ENCODE measurements at regions of chr17 and their contacts with region 1.

Region 1: DNA sequence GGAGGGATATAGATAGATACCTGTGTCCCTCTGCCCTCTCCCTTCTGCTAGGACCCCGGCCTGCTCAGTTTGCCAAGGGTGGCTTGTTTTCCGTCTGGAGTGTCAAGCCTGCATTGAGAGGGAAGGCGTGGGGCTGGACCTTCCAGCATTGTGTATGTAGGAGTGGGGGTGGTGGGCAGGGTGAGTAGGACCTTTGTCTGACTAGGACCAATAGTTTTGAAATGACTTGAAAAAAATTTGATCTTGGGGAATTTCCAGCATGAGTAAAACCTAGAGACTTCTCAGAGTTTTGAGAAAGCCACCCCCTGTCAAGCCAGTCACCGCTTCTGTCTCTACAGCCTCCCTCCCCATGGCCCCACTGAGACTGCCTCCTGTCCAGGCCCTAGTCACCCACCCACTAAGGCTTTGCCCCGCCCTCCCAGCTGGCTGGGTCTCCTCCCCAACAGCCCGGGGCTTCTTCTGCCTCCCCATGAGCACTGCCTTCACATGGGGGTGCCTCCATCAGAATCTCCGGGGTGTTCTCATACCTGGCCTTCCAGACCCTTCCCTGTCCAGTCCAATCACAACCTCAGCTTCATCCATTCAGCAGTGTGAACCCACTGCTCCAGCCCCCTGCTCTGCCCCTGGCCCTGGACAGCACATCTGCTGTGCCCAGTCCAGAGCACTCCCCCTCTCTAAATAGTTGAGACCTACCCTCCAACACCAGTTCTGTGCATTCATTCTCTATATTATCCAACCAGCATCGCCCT is 207.0 kb downstream of the MSI2 start:
- DNase-seq: peak; percentile 82
- H3K4me3 Mint-ChIP-seq: peak overlapping the region; percentile 70
- H3K27ac Mint-ChIP-seq: peak overlapping the region; percentile 90
- H3K4me1 Mint-ChIP-seq: peaks cover 72% of the 10 kb centered on the region
- H3K27me3 Mint-ChIP-seq: no peaks in the 10 kb centered on the region

Region 2: DNA sequence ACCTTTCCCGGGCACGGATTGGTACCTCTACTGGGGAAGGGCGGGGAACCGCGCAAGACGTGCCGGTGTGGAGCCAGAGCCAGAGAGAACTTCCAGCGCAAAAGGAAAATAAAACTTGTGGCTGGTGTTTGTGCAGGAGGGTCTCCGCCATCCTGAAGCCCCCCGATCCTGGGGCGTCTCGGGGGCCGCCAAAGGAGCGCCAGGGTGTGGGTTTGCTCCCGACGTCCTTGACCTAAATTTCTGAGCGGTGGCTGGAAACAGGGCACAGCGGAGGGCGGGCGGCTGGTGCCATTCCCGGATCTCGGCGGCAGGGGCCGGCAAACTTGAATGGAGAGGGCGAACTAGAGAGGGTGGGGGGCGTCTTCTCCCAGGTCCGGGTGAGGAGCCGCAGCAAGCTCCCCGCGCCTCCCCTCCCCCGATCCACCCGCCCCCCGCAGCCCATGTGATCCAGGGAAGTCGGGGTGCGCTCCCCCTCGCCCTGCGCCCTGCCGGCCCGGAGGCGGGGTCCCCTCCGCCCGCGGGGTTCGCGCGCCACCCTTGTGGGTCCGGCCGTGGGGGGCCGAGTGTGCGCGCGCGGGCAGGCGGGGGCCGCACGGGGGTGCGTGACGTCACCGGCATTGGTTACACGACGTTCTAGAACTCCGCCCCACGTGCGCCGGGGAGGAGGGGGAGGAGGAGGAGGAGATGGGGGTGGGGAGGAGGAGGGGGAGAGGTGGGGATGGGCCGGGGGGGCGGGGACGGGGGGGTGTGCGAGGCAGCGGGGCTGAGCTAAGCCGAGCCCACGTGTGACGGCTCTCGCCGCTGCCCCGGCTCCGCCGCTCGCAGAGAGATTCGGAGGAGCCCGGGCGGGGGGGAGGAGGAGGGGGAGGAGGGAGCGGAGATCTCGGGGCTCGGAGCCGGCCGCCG is 207.2 kb before region 1 on chr17 and contains the start of gene MSI2:
- intact Hi-C with region 1: loop called (anchors 1 kb)
- DNase-seq: peak; percentile 84
- H3K4me3 Mint-ChIP-seq: peak within 1 kb of the TSS; percentile 89
- H3K27ac Mint-ChIP-seq: peak within 1 kb of the TSS; percentile 93
- H3K4me1 Mint-ChIP-seq: peaks cover 47% of the 10 kb centered on the region
- H3K27me3 Mint-ChIP-seq: no peaks in the 10 kb centered on the region
- total RNA-seq, gene MSI2: 272 and 278 TPM in 2 replicates

Region 3: DNA sequence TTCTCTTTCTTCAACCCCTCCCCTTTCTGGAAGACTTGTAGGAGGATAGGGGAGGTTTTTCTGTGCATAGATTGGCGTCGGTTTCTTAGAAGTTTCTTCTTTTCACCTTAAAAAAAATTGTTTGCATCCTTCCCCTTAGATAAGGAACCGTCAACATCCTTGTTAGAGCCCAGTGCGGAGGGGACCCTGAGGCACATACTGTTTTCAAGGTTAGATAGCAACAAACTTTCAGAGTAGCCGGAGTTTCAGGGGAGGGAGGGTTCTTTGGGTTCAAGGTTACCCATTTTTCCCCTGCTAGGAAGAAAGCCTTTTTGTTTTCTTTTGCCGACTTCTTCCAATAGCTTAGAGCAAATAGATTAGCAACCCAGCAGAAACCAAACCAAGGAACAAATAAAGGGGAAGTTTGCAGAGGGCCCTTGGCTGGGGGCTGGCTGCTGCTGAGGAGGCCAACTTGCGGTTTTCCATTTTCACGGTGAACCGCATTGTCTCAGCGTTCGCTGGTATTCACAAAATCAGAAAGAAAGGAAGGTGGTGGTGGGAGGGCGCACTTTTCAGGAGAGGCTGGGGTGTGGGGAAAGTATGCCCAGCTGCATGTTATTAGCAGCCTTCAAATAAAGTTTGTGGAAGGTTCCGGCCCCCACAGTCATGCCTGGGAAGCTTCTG is 178.2 kb before region 1 on chr17:
- intact Hi-C with region 1: loop called (anchors 1 kb)
- DNase-seq: peak; percentile 64
- H3K4me3 Mint-ChIP-seq: peak overlapping the region; percentile 59
- H3K27ac Mint-ChIP-seq: peak overlapping the region; percentile 94
- H3K4me1 Mint-ChIP-seq: peaks cover 94% of the 10 kb centered on the region
- H3K27me3 Mint-ChIP-seq: no peaks in the 10 kb centered on the region

Region 4: GRCh38 chr17:57486873-57487301 is 23.6 kb after region 1 on chr17:
- intact Hi-C with region 1: loop called (anchors 1 kb)
- DNase-seq: no peak
- H3K4me3 Mint-ChIP-seq: peak overlapping the region; percentile 27
- H3K27ac Mint-ChIP-seq: peak overlapping the region; percentile 33
- H3K4me1 Mint-ChIP-seq: peaks cover 64% of the 10 kb centered on the region
- H3K27me3 Mint-ChIP-seq: no peaks in the 10 kb centered on the region

Region 5: GRCh38 chr17:57505841-57506773 is 42.8 kb after region 1 on chr17:
- intact Hi-C with region 1: loop called (anchors 2 kb)
- DNase-seq: no peak
- H3K4me3 Mint-ChIP-seq: no peak overlapping the region
- H3K27ac Mint-ChIP-seq: no peak overlapping the region
- H3K4me1 Mint-ChIP-seq: peaks cover 12% of the 10 kb centered on the region
- H3K27me3 Mint-ChIP-seq: no peaks in the 10 kb centered on the region

Region 6: DNA sequence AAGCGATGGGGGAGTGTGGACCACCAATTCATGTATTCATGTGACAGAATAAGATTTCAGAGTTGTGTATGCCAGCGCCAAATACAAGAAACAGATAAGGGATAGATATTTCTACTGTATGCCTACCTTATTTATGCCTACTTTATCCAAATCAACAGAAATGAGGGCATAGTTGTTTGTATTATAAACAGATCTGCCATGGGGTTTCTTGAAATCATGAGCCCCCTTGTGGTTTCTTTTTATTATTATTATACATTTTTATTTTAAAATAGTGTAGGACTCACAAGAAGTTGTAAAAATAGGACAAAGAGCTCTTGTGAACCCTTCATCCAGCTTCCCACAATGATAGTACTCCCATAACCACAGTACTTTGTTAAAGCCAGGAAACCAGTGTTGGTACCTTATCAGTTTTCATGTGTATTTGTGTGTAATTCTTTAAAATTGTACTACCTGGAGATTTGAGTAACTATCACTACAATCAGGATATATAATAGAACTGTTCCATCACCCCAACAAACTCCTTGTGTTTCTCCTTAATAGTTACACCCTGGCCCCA is 52.5 kb after region 1 on chr17:
- intact Hi-C with region 1: loop called (anchors 2 kb)
- DNase-seq: no peak
- H3K4me3 Mint-ChIP-seq: no peak overlapping the region
- H3K27ac Mint-ChIP-seq: peak overlapping the region; percentile 5
- H3K4me1 Mint-ChIP-seq: peaks cover 20% of the 10 kb centered on the region
- H3K27me3 Mint-ChIP-seq: peaks cover 2% of the 10 kb centered on the region

Region 7: DNA sequence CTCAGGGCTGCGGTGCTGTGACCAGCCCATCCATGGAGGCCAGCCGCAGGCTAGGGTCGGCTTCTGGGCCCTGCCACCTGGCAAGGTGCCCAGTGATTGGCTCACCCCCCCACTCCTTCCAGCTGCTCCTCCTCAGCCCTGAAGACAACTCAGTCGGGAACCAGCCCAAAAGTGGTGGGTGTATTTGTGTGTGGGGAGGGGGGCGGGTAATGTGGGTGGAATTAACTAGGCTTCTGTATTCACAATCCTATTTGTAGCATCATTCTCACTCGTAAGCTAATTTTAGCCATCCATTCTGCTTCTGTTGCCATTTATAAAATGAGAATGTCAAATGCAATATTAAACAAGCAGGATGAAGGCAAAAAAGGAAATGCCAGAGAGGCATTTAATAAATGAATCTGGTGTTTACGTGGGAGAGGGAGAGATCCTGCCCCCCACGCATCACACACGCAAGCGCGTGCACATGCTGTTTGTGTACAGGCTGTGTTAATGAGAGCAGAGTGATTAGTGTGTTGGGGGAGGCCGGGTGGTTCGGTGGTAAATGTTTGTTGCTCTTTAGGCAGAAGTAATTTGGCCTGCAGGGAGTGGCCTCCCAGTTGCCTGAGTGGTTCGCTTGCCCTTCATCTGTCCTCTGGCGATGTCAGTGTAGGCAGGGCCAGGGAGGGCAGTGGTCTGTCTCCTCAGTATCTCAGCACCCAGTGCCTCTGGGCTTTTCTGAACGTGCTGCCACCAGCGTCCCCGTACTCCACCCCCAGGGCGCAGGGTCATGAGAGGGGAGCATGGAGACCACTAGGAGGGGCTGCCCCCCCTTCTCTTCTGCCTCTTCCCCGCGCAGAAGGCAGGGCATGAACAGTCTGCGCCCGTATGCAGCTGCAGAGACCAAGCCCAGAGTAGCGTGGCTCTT is 141.7 kb after region 1 on chr17:
- intact Hi-C with region 1: loop called (anchors 2 kb)
- DNase-seq: no peak
- H3K4me3 Mint-ChIP-seq: peak overlapping the region; percentile 54
- H3K27ac Mint-ChIP-seq: peak overlapping the region; percentile 94
- H3K4me1 Mint-ChIP-seq: peaks cover 70% of the 10 kb centered on the region
- H3K27me3 Mint-ChIP-seq: no peaks in the 10 kb centered on the region

Measured in activated T-helper 1 cell treated with anti-CD3 and anti-CD28 coated beads, Interleukin-12 subunit alpha, Interleukin-12 subunit beta, Interleukin-2, Interleukin-4 antibody, amounts not matched to agents 30 ng/mL and 10 ng/mL and 1 ng/mL, durations not matched to agents 14 hours and 24 hours and 36 hours (primary cell).